GM10248 (cell line): ENCODE measurements at regions of chr4 and their contacts with region 1.

Region 1: GRCh38 chr4:67327262-67328017 is 217.9 kb downstream of the CENPC start:
- DNase-seq: peak; percentile 64
- CTCF ChIP-seq: peak; percentile 87

Region 2: GRCh38 chr4:67344594-67345380 is 17.3 kb after region 1 on chr4:
- CTCF ChIA-PET with region 1: interaction called, 18 read pairs
- POLR2A ChIA-PET with region 1: no interaction called
- DNase-seq: no peak
- CTCF ChIP-seq: no peak

Region 3: DNA sequence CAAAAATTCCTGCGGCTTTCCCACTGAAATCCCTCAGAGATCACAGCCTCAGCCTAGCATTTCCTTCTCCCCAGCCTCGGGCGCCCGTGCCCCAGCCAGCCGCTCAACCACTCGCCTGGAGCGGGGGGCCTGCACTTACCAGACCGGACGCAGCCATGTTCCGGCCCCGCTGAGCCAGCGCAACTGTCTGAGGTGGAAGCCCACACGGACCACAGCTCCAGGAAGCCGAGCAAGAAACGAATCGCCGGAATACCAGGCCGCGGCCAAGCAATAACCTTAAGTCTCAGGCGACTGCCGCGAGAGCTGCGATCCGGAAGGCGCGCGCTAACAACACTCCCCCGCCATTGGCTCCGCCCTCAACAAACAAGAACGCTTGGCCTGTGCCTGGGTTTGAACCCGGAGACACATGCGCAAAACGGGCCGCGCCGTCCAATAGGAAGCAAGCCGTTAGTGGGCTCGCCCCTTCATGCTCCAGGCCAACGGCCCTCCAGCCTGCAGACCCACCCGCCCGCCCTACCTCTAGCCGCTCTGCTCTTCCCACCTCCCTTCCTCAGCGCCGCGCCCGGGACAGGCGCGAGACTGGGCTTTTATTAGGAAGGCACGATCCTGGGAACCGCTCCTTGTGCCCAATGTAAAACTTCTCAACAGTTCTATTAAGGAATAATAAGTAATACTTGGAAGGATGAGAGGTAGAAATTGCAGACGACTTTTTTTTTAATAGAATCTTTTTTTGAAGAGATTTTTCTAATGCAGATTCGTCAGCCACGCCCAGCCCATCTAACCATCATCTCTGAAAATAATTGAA is 218.0 kb after region 1 on chr4 and contains the start of gene CENPC:
- CTCF ChIA-PET with region 1: no interaction called
- POLR2A ChIA-PET with region 1: no interaction called
- DNase-seq: peak; percentile 93
- CTCF ChIP-seq: no peak